Left ventricle myocardium inferior (tissue), 1 donor: ENCODE measurements at regions of chr7 and their contacts with region 1.

Region 1: GRCh38 chr7:66553001-66553400 is 75.7 kb upstream of the KCTD7 start:
- DNase-seq: no peak
- H3K4me3 ChIP-seq: no peak overlapping the region
- H3K27ac ChIP-seq: no peak overlapping the region
- H3K4me1 ChIP-seq: peaks cover 9% of the 10 kb centered on the region
- H3K27me3 ChIP-seq: no peaks in the 10 kb centered on the region
- CTCF ChIP-seq: no peak

Region 2: DNA sequence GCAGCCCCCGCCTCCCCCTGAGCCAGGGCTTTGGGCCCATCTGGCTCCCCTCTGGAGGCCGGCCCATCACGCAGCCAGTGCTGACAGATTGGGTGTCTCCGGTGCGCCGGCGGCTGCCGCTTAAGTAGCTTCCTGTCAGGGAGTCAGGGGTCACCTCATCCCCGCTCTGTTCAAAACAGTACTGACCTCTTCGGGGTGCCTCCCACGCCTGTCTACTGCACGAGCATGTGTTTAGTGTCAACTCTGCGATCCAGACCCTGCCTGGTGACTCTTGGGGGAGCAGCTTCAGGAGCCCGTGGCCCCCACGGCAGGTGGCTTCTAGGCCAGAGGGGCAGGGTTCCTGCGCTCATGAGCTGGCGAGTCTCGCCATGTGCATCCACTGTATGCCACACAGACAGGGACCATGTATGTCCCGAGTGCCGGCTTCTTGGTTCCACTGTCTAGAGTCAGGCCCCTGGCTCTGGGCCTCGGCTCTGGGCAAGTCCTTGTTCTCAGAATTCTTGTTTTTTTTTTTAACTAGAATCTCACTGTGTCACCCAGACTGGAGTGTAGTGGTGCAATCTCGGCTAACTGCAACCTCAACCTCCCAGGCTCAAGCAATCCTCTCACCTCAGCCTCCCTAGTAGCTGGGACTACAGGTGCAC is 111.8 kb after region 1 on chr7:
- intact Hi-C with region 1: loop called (anchors 5 kb)
- DNase-seq: no peak
- H3K4me3 ChIP-seq: no peak overlapping the region
- H3K27ac ChIP-seq: no peak overlapping the region
- H3K4me1 ChIP-seq: no peaks in the 10 kb centered on the region
- H3K27me3 ChIP-seq: no peaks in the 10 kb centered on the region
- CTCF ChIP-seq: no peak